ENCODE measurements at regions of chr5 and their contacts with region 1.

Region 1: DNA sequence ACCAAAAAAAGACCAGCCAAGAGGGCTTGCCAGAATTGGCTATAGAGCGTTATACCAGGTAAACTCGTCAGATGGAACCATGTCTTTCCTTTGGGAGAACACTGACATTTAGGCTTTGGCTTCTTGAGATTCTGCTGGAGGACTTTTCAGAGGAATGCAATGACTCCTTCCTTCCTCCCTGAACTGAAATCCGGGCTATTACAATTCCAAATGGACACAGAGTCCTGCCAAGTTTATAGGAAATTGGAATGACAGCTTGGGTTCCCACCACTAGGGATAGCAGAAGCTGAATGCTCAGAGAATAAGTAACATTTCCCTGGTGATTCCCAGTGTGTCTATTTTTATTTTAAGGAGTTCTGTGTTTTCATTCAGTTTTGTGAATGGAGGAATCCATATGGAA is 143.0 kb downstream of the FGF1 start:
- DNase-seq: peak in 2 of 5 donors; percentile 31 to 49
- ATAC-seq: peak; percentile 53 to 86 (median 83)
- H3K4me3 ChIP-seq: no peak overlapping the region
- H3K27ac ChIP-seq: peak overlapping the region; percentile 63 to 89 (median 80)
- H3K4me1 ChIP-seq: peaks cover 0 to 57% (median 34%) of the 10 kb centered on the region in 12 donors
- H3K27me3 ChIP-seq: no peaks in the 10 kb centered on the region
- CTCF ChIP-seq: peak in 7 of 12 donors; percentile 16 to 53 (median 38)
- POLR2A ChIP-seq: no peak

Region 2: DNA sequence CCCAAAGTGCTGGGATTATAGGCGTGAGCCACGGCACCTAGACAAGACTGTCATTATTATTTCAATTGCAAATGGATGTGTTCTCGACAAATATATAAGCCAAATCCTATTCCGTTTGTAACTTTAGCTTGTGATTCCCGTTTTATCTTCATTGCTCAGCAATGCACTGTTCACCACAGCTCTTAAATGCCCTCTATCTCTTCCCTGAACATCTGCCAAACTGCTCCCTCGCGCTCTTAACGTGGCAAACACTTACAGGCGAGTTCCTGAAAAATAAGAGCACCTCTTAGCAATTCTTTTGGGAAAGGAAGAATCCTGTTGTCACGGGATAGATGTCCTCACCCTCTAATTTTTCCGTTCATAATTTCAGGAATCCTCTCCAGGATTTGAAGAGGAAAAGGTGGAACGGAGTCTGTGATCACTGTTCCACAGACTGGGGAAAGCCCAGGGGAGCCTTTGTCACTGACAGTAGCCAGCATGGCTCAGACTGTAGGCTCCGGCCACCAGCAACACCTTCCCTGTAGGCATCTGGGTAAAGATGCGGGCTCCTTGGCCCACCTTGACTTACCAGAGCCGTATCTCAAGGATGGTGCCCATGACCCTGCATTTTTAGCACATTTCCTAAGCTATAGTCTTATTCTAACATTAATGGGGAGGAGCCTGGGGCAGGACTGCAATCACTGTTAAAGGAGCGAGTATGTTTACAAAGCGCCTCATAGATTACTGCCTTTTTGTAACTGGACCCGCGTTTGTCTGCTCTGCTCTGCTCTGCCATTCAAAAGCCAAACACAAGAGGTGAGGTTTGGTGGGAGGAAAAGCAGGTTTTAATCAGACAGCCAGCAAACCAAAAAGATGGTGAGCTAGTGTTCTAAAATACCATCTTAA is 509.9 kb before region 1 on chr5:
- intact Hi-C with region 1: no loop called
- DNase-seq: no peak
- ATAC-seq: peak in 3 of 4 donors; percentile 52 to 59 (median 56)
- H3K4me3 ChIP-seq: no peak overlapping the region
- H3K27ac ChIP-seq: peak overlapping the region in 1 of 12 donors; percentile 5
- H3K4me1 ChIP-seq: peaks cover 0 to 6% (median 0%) of the 10 kb centered on the region in 12 donors
- H3K27me3 ChIP-seq: no peaks in the 10 kb centered on the region
- CTCF ChIP-seq: no peak
- POLR2A ChIP-seq: no peak

Region 3: DNA sequence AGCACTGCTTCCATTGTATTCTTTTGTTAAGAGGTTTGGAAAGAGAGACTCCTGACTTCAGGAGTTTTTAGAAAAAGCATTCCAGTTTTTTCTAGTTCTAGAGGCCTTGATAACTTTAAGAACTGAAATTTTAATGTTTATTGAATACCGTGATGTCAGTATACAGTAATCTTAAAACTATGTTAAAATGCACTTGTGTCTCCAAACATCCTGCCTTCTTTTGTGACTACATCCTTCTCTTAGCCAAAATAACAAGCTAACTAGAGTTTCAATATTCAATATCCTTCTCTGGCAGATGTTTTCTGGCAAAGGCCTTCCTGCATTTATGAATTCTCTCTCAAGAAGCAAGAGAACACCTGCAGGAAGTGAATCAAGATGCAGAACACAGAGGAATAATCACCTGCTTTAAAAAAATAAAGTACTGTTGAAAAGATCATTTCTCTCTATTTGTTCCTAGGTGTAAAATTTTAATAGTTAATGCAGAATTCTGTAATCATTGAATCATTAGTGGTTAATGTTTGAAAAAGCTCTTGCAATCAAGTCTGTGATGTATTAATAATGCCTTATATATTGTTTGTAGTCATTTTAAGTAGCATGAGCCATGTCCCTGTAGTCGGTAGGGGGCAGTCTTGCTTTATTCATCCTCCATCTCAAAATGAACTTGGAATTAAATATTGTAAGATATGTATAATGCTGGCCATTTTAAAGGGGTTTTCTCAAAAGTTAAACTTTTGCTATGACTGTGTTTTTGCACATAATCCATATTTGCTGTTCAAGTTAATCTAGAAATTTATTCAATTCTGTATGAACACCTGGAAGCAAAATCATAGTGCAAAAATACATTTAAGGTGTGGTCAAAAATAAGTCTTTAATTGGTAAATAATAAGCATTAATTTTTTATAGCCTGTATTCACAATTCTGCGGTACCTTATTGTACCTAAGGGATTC is 391.2 kb before region 1 on chr5:
- intact Hi-C with region 1: loop called in 9 of 10 experiments (anchors 1 to 5 kb)
- DNase-seq: peak in 3 of 5 donors; percentile 41 to 63 (median 52)
- ATAC-seq: peak in 3 of 4 donors; percentile 65 to 70 (median 66)
- H3K4me3 ChIP-seq: no peak overlapping the region
- H3K27ac ChIP-seq: peak overlapping the region in 1 of 12 donors; percentile 14
- H3K4me1 ChIP-seq: peaks cover 0 to 10% (median 3%) of the 10 kb centered on the region in 12 donors
- H3K27me3 ChIP-seq: no peaks in the 10 kb centered on the region
- CTCF ChIP-seq: peak; percentile 82 to 95 (median 88)
- POLR2A ChIP-seq: no peak

Region 4: DNA sequence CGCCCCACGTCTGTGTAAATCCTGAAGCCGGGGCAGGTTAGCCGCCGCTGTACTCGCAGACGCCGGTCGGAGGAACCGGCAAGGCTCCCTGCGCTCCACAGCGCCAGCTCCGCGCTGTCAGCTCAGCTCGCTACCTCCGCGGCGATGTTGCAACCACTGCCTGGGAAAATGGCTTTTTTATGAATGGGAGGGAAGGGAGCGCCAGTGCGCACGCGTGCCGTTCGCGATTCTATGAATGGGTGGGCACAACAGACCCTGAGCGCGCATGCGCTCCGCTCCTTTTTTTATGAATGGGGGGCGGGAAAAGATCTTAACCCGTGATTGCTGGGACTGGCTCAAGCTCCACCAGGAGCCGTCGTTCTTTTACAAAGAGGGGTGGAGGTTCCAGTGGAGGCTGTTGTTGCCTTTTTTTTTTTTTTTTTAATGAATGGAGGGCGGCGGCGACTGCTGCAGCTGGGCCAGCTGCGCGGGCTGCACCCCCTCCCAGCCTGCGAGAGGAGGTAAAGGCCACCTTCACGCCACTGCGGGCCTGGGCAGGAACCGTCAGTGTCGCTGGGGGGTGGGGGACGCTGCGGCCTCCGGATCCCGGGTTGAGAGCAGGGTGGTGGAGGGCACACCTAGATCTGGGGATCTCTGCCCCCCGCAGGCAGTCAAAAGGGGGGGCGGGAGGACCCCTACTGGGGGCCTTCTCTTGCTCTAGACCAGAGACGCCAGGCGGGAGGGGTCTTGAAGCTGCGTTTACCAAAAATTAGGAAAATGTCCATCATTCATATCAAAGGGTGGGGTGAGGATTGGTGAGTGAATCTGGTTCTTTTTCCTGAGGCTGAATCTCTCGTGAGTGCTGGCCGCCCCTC is 217.8 kb before region 1 on chr5 and contains the start of gene SPRY4:
- intact Hi-C with region 1: loop called (anchors 2 to 10 kb)
- DNase-seq: peak; percentile 93 to 96 (median 95)
- ATAC-seq: peak; percentile 78 to 87 (median 80)
- H3K4me3 ChIP-seq: peak within 1 kb of the TSS; percentile 59 to 99 (median 78)
- H3K27ac ChIP-seq: peak within 1 kb of the TSS; percentile 81 to 99 (median 91)
- H3K4me1 ChIP-seq: peaks cover 0 to 57% (median 39%) of the 10 kb centered on the region in 12 donors
- H3K27me3 ChIP-seq: peaks cover 0 to 54% (median 0%) of the 10 kb centered on the region in 9 donors
- CTCF ChIP-seq: peak in 4 of 12 donors; percentile 5 to 13 (median 6)
- POLR2A ChIP-seq: peak; percentile 14 to 93
- total RNA-seq, gene SPRY4: 4.5 to 21.3 (median 13.8) TPM

Region 5: GRCh38 chr5:142426129-142427014 is 116.5 kb before region 1 on chr5:
- intact Hi-C with region 1: loop called in 8 of 10 experiments (anchors 5 to 10 kb)
- DNase-seq: peak; percentile 77 to 86 (median 82)
- ATAC-seq: peak; percentile 53 to 86 (median 76)
- H3K4me3 ChIP-seq: peak overlapping the region in 2 of 12 donors; percentile 1 to 16
- H3K27ac ChIP-seq: peak overlapping the region; percentile 12 to 80 (median 52)
- H3K4me1 ChIP-seq: peaks cover 0 to 51% (median 30%) of the 10 kb centered on the region in 12 donors
- H3K27me3 ChIP-seq: no peaks in the 10 kb centered on the region
- CTCF ChIP-seq: no peak
- POLR2A ChIP-seq: no peak

Region 6: GRCh38 chr5:142446131-142446959 is 96.6 kb before region 1 on chr5:
- intact Hi-C with region 1: loop called in 1 of 10 experiments (anchors 5 kb)
- DNase-seq: no peak
- ATAC-seq: peak; percentile 22 to 62 (median 46)
- H3K4me3 ChIP-seq: no peak overlapping the region
- H3K27ac ChIP-seq: peak overlapping the region in 10 of 12 donors; percentile 0 to 73 (median 55)
- H3K4me1 ChIP-seq: peaks cover 0 to 28% (median 12%) of the 10 kb centered on the region in 12 donors
- H3K27me3 ChIP-seq: no peaks in the 10 kb centered on the region
- CTCF ChIP-seq: no peak
- POLR2A ChIP-seq: no peak

Region 7: DNA sequence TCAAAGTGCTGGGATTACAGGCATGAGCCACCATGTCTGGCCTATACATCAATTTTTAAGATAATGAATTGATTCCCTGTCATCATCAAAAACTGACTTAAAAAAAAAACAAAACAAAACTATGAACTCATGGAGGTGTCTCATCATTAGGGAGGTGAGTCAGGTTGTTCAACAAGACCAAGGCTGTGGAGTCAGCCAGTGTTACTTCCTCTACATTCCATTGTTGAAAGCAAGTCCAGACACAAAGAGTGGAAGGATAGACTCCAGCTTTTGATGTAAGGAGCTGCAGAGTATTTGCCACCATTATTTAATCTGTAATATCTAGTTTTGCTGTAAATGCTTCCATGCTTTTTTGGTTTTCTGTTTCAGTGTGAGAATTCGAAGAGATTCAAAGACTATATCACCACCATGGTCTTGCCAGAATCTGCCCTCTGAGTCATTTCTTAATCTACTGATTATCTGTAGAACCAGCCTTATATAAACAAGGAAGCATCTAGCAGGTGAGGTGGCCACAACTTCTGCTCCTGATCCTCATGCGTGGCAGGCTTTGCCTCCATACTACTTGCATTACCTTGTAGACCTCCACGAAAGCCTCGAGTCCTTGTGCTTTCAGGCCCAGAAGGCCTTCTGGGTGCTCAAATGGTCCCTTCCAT is 13.2 kb before region 1 on chr5:
- intact Hi-C with region 1: no loop called
- DNase-seq: no peak
- ATAC-seq: no peak
- H3K4me3 ChIP-seq: no peak overlapping the region
- H3K27ac ChIP-seq: no peak overlapping the region
- H3K4me1 ChIP-seq: peaks cover 0 to 33% (median 5%) of the 10 kb centered on the region in 12 donors
- H3K27me3 ChIP-seq: no peaks in the 10 kb centered on the region
- CTCF ChIP-seq: no peak
- POLR2A ChIP-seq: no peak

Region 8: GRCh38 chr5:142627383-142628255 is 84.7 kb after region 1 on chr5:
- intact Hi-C with region 1: no loop called
- DNase-seq: no peak
- ATAC-seq: no peak
- H3K4me3 ChIP-seq: no peak overlapping the region
- H3K27ac ChIP-seq: peak overlapping the region in 2 of 12 donors; percentile 16 to 21
- H3K4me1 ChIP-seq: peaks cover 0 to 50% (median 31%) of the 10 kb centered on the region in 12 donors
- H3K27me3 ChIP-seq: no peaks in the 10 kb centered on the region
- CTCF ChIP-seq: no peak
- POLR2A ChIP-seq: no peak

Measured in heart left ventricle (tissue), 16 donors.